PC-9 (cell line): ENCODE measurements at regions of chr15 and their contacts with region 1.

Region 1: GRCh38 chr15:85456798-85457197 is 76.4 kb downstream of the AKAP13 start:
- DNase-seq: no peak
- H3K4me3 ChIP-seq: no peak overlapping the region
- H3K27ac ChIP-seq: no peak overlapping the region
- H3K4me1 ChIP-seq: peaks cover 16% of the 10 kb centered on the region
- H3K27me3 ChIP-seq: no peaks in the 10 kb centered on the region
- CTCF ChIP-seq: no peak

Region 2: GRCh38 chr15:85412956-85413854 is 43.6 kb before region 1 on chr15:
- CTCF ChIA-PET with region 1: interaction called, 11 read pairs
- POLR2A ChIA-PET with region 1: no interaction called
- intact Hi-C with region 1: no loop called
- DNase-seq: peak; percentile 59 to 90
- H3K4me3 ChIP-seq: no peak overlapping the region
- H3K27ac ChIP-seq: peak overlapping the region; percentile 98
- H3K4me1 ChIP-seq: peaks cover 46% of the 10 kb centered on the region
- H3K27me3 ChIP-seq: no peaks in the 10 kb centered on the region
- CTCF ChIP-seq: no peak

Region 3: GRCh38 chr15:85504749-85505676 is 48.2 kb after region 1 on chr15:
- CTCF ChIA-PET with region 1: no interaction called
- POLR2A ChIA-PET with region 1: no interaction called
- intact Hi-C with region 1: no loop called
- DNase-seq: peak; percentile 11 to 38
- H3K4me3 ChIP-seq: no peak overlapping the region
- H3K27ac ChIP-seq: no peak overlapping the region
- H3K4me1 ChIP-seq: no peaks in the 10 kb centered on the region
- H3K27me3 ChIP-seq: no peaks in the 10 kb centered on the region
- CTCF ChIP-seq: peak; percentile 70

Region 4: GRCh38 chr15:85527895-85528294 is 71.1 kb after region 1 on chr15:
- CTCF ChIA-PET with region 1: no interaction called
- POLR2A ChIA-PET with region 1: no interaction called
- intact Hi-C with region 1: no loop called
- DNase-seq: no peak
- H3K4me3 ChIP-seq: no peak overlapping the region
- H3K27ac ChIP-seq: no peak overlapping the region
- H3K4me1 ChIP-seq: no peaks in the 10 kb centered on the region
- H3K27me3 ChIP-seq: no peaks in the 10 kb centered on the region
- CTCF ChIP-seq: no peak